ENCODE measurements at regions of chr1 and their contacts with region 1.

Region 1: DNA sequence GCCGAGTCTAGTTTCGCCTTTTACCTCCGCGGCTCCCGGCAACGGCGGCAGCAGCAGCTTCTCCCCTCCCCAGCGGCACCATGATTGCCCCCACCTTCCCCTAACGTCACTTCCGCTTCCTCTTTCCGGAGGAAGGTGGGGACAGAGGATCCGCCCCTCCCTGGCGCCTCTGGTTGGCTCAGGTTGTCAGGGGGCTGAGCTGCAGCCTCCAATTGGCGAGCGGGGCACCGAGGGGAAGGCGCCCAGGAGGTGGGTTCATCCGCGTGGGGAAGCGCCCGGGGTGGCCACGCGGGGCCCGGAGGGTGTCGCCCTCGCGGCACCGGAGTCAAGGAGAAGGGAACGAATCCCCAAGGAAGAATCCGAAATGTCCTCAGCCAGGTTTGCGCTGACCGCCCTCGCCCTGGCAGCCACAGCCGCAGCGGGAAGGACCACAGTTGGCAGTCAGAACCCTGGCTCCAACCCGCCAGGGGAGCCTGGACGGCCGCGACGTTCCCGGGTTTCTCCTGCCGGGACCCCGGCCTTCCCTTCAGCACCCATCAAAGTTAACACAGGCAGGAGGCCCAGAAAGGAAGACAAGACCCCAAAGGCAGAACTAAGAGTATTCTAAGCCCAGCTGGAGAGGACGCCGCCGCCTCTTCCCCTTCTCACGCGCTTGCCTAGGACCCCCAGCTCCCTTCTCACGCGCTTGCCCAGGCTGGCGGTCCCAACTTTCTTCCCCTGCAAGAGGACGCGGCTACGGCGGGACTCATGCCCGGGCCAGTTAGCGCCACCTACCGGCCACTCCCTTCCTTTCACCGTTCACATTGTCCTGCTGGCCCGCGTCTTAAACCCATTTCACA is at the start of gene MTF1:
- DNase-seq: peak; percentile 76
- H3K4me3 ChIP-seq: peak within 1 kb of the TSS; percentile 99
- CTCF ChIP-seq: peak; percentile 94

Region 2: GRCh38 chr1:37807555-37808368 is 52.0 kb before region 1 on chr1 and contains the starts of genes C1orf122 and YRDC:
- CTCF ChIA-PET with region 1: interaction called, 17 read pairs
- POLR2A ChIA-PET with region 1: interaction called, 3 read pairs
- DNase-seq: peak; percentile 53
- H3K4me3 ChIP-seq: peak within 1 kb of the TSS; percentile 84
- CTCF ChIP-seq: no peak

Region 3: DNA sequence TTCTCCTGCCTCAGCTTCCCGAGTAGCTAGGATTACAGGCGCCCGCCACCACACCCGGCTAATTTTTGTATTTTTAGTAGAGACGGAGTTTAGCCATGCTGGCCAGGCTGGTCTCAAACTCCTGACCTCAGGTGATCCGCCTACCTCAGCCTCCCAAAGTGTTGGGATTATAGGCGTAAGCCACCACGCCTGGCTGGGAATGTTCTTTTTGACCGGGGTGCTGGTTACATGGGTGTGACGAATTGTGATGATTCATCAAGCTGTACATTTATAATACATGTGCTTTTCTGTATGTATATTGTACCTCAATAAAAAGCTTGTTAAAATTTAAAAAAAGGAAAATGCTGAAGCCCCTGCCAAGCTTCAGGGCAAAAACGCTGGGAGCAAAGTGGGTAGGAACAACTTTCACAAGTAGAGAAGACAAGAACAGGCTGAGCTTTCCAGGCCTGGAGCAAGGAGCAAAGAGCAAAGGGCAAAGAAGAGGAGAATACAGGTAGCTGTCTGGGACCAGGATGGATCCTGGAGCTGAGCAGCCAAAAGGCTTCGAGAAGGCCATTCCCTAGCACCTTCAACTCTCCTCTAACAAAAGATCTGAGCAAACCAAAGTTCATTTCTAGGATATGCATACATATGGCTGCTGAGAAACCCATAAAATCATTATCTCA is 31.2 kb before region 1 on chr1:
- CTCF ChIA-PET with region 1: interaction called, 25 read pairs
- POLR2A ChIA-PET with region 1: no interaction called
- DNase-seq: no peak
- H3K4me3 ChIP-seq: no peak overlapping the region
- CTCF ChIP-seq: no peak

Region 4: DNA sequence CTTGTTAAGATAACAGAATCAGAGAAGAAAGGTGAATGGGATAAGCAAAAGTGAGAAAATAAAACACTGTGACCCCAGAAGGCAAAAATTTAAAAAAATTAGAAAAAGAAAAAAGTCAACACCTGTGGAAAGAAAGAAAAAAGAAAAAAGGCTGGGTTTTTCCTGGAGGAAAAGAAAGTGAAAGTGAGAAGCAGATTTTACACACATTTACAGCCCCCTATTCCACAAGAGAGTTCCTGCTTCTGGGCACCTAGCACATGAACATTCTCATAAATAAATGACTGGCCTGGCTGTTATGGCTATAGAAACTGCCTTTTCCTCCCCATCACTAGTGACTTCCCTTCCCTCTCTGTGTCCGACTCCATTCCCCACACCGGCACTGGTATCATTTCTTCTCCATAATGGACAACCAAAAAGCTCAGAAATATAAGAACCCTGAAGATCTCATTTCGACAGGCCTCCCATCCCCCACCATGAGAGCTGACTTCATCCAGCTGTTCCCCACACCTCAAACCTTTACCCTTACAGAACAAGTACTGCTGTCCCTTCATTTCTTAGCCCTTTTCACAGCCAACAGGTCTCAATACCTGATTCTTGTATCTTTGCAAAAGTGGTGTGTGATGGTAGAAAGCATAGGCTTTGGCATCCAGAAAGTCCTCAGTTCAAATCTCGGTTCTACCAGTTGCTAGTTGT is 12.9 kb before region 1 on chr1:
- CTCF ChIA-PET with region 1: interaction called, 59 read pairs
- POLR2A ChIA-PET with region 1: interaction called, 10 read pairs
- DNase-seq: no peak
- H3K4me3 ChIP-seq: no peak overlapping the region
- CTCF ChIP-seq: no peak

Region 5: GRCh38 chr1:37883671-37884070 is 23.9 kb after region 1 on chr1:
- CTCF ChIA-PET with region 1: interaction called, 33 read pairs
- POLR2A ChIA-PET with region 1: interaction called, 3 read pairs
- DNase-seq: no peak
- H3K4me3 ChIP-seq: no peak overlapping the region
- CTCF ChIP-seq: no peak

Region 6: DNA sequence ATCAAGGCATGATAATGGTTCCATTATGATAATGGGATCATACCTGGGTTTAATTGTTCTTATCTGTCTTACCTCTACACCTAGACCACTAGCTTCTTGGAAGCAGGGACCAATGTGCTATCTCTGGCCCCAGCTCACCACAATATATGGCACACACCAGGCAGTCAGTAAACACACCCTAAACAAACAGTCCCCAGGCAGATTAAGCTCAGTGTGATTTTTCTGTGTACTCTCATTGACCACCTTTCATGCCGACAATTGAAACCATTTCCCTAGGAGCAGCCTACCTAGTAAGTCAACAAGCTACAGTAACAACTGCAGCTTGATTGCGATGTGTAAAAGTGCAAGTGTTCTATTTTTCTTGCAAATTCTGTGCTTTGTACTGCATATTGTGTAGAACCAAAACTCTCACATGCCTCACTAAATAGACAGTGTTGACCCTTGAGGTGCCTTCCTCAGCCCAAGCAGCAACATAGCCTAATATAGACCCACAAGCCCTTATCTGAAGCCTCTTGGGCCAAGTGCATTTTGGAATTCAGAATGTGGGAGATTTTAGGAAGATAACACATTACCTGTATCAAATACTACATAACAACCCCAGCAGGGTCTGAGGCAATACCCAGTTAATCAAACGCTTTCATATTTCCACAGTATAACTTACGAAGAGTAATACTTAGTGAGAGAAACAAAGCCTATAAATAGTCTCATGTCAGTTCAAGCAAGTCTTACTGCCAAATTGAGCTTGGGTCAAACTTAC is 55.2 kb after region 1 on chr1:
- CTCF ChIA-PET with region 1: interaction called, 13 read pairs
- POLR2A ChIA-PET with region 1: no interaction called
- DNase-seq: no peak
- H3K4me3 ChIP-seq: no peak overlapping the region
- CTCF ChIP-seq: no peak

Region 7: DNA sequence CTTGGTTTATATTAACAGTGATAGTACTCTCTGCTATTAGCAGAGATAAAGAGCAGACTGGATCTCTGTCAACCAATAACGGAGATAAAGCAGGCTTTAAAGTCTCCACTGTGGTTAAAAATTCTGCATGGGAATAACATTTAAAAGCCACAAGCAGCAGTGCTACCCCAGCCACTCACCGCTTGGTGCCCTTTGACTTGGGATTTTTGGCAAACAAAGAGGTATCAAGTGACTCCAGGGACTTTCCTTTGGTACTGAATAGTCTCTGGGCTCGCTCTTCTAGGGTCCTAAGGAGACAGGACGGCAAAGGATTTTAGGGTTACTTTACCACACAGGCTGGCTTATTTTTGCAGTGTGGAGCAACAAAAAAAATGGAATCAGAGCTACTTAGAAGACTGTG is 118.8 kb after region 1 on chr1:
- CTCF ChIA-PET with region 1: interaction called, 12 read pairs
- POLR2A ChIA-PET with region 1: no interaction called
- DNase-seq: no peak
- H3K4me3 ChIP-seq: no peak overlapping the region
- CTCF ChIP-seq: no peak

Region 8: DNA sequence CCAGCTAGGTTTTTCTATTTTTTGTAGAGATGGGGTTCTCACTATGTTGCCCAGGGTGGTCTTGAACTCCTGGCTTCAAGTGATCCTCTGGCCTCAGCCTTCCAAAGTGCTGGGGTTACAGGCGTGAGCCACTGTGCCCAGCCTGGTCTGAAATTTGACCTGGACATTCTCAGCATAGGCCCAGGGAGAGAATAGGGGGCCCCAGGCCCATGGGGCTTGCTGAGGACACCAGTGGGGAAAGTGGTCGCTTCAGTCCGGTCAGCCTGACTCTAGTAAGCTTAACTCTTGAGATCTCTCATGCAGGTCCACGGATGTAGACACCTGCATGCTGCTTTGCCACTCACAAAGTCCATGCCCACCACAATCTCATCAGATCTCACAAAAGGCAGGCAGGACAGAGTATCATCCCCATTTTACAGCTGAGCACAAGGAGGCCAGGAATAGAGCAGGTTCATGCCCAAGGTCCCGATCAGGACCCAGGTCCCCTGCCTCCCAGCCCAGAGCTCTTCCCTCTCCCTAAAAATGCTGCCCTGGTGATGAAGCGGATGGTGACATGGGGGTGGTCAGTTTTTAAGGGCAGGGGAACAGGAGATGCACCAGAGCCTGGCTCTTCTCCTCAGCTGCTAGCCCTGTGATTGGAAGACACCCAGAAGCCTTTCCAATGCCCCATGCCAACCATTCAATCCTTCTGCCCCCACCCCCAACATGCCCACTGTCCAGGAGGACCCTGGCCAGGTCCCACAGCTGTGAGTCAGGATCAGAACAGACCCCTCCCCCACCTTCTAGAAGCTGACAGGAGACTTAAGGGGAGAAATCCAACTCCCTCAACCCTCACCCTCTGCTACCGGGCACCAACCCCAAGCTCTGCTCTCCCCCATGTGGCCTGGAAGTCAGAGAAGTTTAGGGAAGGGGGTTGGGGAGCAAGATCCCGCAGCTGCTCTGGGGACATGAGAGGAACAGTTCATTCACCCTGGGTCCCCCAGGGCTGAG is 143.8 kb after region 1 on chr1:
- CTCF ChIA-PET with region 1: no interaction called
- POLR2A ChIA-PET with region 1: no interaction called
- DNase-seq: no peak
- H3K4me3 ChIP-seq: peak overlapping the region; percentile 93
- CTCF ChIP-seq: no peak

Measured in AG04449 (cell line).